HEK293 (cell line): ENCODE measurements at regions of chr3 and their contacts with region 1.

Region 1: GRCh38 chr3:183766745-183767606 is 58.4 kb downstream of the MAP6D1 start:
- H3K4me3 ChIP-seq: no peak overlapping the region
- H3K27ac ChIP-seq: no peak overlapping the region
- H3K4me1 ChIP-seq: no peaks in the 10 kb centered on the region
- CTCF ChIP-seq: peak; percentile 77

Region 2: DNA sequence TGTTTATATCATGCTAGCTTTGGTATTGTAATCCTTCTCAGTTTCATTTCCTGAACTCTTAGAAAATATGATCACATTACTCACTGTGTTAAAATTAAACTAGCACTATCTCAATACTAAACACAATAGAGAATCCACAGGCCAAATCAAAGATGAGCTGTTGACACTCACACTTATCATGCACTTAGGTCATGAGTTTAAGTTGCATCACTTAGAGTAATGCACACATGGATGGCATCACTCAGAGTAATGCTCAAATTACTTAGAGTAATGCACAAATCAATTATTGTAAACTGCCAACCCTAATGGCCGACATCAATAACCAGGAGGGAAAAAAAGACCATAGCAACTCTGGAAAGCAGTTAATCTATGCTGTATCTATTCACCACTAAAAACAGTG is 298.6 kb before region 1 on chr3:
- CTCF ChIA-PET with region 1: interaction called, 13 read pairs
- POLR2A ChIA-PET with region 1: interaction called, 4 read pairs
- H3K4me3 ChIP-seq: no peak overlapping the region
- H3K27ac ChIP-seq: no peak overlapping the region
- H3K4me1 ChIP-seq: no peaks in the 10 kb centered on the region
- CTCF ChIP-seq: no peak

Region 3: GRCh38 chr3:183711516-183711915 is 55.5 kb before region 1 on chr3:
- CTCF ChIA-PET with region 1: interaction called, 11 read pairs
- POLR2A ChIA-PET with region 1: no interaction called
- H3K4me3 ChIP-seq: no peak overlapping the region
- H3K27ac ChIP-seq: no peak overlapping the region
- H3K4me1 ChIP-seq: no peaks in the 10 kb centered on the region
- CTCF ChIP-seq: no peak